ENCODE measurements at regions of chr20 and their contacts with region 1.

Region 1: DNA sequence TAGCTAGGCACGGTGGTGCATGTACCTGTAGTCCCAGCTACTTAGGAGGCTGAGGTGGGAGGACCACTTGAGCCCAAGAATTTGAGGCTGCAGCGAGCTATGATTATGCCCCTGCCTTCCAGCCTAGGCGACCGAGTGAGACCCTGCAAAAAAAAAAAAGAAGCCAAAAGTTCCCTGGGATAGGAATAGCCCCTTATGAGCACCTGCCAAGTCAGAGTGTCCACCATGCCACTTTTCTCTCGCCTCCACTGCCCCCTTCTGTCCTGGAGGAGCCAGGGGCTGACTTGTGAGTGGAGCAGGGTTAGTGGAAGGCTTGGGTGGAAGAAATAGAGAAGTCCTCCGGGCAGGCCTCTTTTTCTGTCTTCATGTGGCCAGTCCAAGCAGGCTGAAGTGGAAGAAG is 12.1 kb upstream of the DDX27 start:
- DNase-seq: no peak
- H3K4me3 ChIP-seq: no peak overlapping the region
- H3K27ac ChIP-seq: no peak overlapping the region
- H3K4me1 ChIP-seq: no peaks in the 10 kb centered on the region
- H3K27me3 ChIP-seq: no peaks in the 10 kb centered on the region
- CTCF ChIP-seq: no peak
- POLR2A ChIP-seq: no peak

Region 2: DNA sequence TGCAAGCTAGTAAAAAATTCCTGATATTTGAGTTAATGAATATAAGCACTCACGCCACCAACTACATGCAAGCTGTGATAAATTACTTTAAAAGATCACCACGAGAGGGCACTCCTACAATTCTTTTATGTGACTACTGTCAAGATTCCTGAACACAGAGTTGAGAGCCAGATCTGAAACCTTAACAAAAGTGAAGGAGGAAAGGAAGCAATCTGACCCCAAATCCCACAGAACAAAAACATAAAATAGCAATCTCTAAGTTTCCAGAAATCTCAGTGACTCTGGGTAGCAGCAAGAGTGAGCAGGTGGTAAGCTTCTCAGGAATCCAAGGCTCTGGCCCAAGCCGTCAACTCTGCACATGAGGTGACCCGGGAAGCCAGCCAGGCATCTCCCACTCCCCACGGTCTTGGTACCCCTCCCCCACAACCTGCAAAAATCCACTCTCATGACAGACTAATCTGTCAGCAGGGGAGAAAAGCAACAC is 74.0 kb before region 1 on chr20:
- CTCF ChIA-PET with region 1: interaction called, 12 read pairs
- POLR2A ChIA-PET with region 1: no interaction called
- dilution Hi-C with region 1: no loop called
- intact Hi-C with region 1: no loop called
- DNase-seq: peak; percentile 76
- H3K4me3 ChIP-seq: no peak overlapping the region
- H3K27ac ChIP-seq: no peak overlapping the region
- H3K4me1 ChIP-seq: no peaks in the 10 kb centered on the region
- H3K27me3 ChIP-seq: no peaks in the 10 kb centered on the region
- CTCF ChIP-seq: peak; percentile 29 to 32
- POLR2A ChIP-seq: no peak